HepG2 (cell line): ENCODE measurements at regions of chr14 and their contacts with region 1.

Region 1: DNA sequence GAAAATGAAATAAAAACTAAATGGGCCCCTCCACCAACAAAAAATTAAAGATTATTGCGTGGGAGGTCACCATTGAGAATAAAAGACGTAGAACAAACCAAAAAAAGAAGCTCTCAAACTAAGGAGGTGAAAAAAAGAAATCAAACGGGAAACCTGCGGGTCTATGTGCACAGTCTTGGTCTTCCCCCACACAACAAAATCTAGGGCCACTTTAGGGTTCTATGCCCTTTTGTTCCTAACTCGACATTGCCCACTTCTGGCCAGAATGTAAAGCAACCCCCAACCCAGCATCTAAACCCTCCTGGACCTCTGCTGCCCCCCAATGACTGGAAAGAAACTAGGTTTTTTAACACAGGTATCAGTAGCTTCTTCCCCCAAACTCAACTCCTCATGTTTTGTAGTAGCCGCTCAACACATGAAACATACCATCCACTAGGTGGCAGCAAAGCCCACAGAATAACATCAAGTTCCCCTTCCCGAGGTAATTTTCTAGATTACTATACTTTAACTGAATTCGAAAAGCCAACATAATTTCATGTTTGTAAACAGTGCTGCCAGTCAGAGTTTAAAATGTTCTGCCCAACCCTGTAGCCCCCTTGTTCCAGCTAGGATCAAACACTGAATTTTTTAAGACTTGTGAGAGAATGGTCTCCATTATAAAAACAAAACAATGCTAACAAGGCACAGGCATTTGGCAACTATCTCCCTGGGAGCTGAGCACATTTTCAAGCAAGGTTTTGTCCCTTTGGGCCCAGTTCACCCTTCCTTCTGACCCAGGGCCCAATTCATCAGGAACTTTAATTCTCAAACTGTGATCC is 18.7 kb downstream of the DAD1 start:
- DNase-seq: peak; percentile 98
- ATAC-seq: peak; percentile 86
- H3K4me3 ChIP-seq: no peak overlapping the region
- H3K27ac ChIP-seq: peak overlapping the region; percentile 12
- H3K4me1 ChIP-seq: peaks cover 29% of the 10 kb centered on the region
- H3K27me3 ChIP-seq: no peaks in the 10 kb centered on the region
- CTCF ChIP-seq: peak; percentile 97
- EP300 ChIP-seq: no peak; a peak in 1 of 4 replicates
- POLR2A ChIP-seq: no peak
- RAD21 ChIP-seq: peak; percentile 96

Region 2: GRCh38 chr14:22491683-22492621 is 78.4 kb before region 1 on chr14:
- CTCF ChIA-PET with region 1: no interaction called
- POLR2A ChIA-PET with region 1: no interaction called
- in situ Hi-C with region 1: no loop called
- intact Hi-C with region 1: no loop called
- DNase-seq: no peak
- ATAC-seq: no peak
- H3K4me3 ChIP-seq: no peak overlapping the region
- H3K27ac ChIP-seq: no peak overlapping the region
- H3K4me1 ChIP-seq: no peaks in the 10 kb centered on the region
- H3K27me3 ChIP-seq: peaks cover 2 to 28% of the 10 kb centered on the region in 2 experiments; a peak in 4 of 5 replicates
- CTCF ChIP-seq: no peak
- EP300 ChIP-seq: no peak
- POLR2A ChIP-seq: no peak
- RAD21 ChIP-seq: no peak

Region 3: DNA sequence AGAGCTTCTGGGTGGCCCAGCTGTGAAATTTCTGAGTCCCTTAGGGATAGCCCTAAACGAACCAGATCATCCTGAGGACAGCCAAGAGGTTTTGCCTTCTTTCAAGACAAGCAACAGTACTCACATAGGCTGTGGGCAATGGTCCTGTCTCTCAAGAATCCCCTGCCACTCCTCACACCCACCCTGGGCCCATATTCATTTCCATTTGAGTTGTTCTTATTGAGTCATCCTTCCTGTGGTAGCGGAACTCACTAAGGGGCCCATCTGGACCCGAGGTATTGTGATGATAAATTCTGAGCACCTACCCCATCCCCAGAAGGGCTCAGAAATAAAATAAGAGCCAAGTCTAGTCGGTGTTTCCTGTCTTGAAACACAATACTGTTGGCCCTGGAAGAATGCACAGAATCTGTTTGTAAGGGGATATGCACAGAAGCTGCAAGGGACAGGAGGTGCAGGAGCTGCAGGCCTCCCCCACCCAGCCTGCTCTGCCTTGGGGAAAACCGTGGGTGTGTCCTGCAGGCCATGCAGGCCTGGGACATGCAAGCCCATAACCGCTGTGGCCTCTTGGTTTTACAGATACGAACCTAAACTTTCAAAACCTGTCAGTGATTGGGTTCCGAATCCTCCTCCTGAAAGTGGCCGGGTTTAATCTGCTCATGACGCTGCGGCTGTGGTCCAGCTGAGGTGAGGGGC is 20.2 kb before region 1 on chr14:
- CTCF ChIA-PET with region 1: no interaction called
- POLR2A ChIA-PET with region 1: no interaction called
- in situ Hi-C with region 1: no loop called
- intact Hi-C with region 1: no loop called
- DNase-seq: no peak
- ATAC-seq: no peak
- H3K4me3 ChIP-seq: no peak overlapping the region
- H3K27ac ChIP-seq: no peak overlapping the region
- H3K4me1 ChIP-seq: 0 out of 2 replicates have a peak, but pooled peaks cover 8% of the 10 kb centered on the region
- H3K27me3 ChIP-seq: peaks cover 11 to 82% of the 10 kb centered on the region in 2 experiments; a peak in 4 of 5 replicates
- CTCF ChIP-seq: no peak
- EP300 ChIP-seq: no peak
- POLR2A ChIP-seq: no peak
- RAD21 ChIP-seq: no peak

Region 4: GRCh38 chr14:22598099-22598899 is 28.0 kb after region 1 on chr14 and contains the start of gene ABHD4:
- CTCF ChIA-PET with region 1: no interaction called
- POLR2A ChIA-PET with region 1: interaction called, 18 read pairs
- in situ Hi-C with region 1: no loop called
- intact Hi-C with region 1: no loop called
- DNase-seq: peak; percentile 79
- ATAC-seq: peak; percentile 95
- H3K4me3 ChIP-seq: peak within 1 kb of the TSS; percentile 76 to 94 (median 82)
- H3K27ac ChIP-seq: peak within 1 kb of the TSS; percentile 73
- H3K4me1 ChIP-seq: peaks cover 34% of the 10 kb centered on the region
- H3K27me3 ChIP-seq: peaks cover 0 to 13% of the 10 kb centered on the region in 2 experiments; a peak in 2 of 5 replicates
- CTCF ChIP-seq: no peak
- EP300 ChIP-seq: peak; percentile 32 to 50; a peak in 2 of 4 replicates
- POLR2A ChIP-seq: peak in 1 of 2 experiments; percentile 85; a peak in 2 of 4 replicates
- RAD21 ChIP-seq: 0 out of 2 replicates have a peak, but pooled peaks have one; percentile 6
- total RNA-seq, gene ABHD4: 16.1 and 22.8 TPM in 2 replicates

Region 5: GRCh38 chr14:22644305-22644635 is 73.9 kb after region 1 on chr14 and contains the start of gene OR6J1:
- CTCF ChIA-PET with region 1: interaction called, 25 read pairs
- POLR2A ChIA-PET with region 1: no interaction called
- in situ Hi-C with region 1: no loop called
- intact Hi-C with region 1: loop called (anchors 1 kb)
- DNase-seq: no peak
- ATAC-seq: peak; percentile 66
- H3K4me3 ChIP-seq: no peak within 1 kb of the TSS
- H3K27ac ChIP-seq: no peak within 1 kb of the TSS
- H3K4me1 ChIP-seq: peaks cover 14% of the 10 kb centered on the region
- H3K27me3 ChIP-seq: peaks cover 0 to 3% of the 10 kb centered on the region in 2 experiments; a peak in 3 of 5 replicates
- CTCF ChIP-seq: no peak
- EP300 ChIP-seq: no peak
- POLR2A ChIP-seq: no peak
- RAD21 ChIP-seq: no peak
- total RNA-seq, gene OR6J1: not detected in 2 replicates

Region 6: DNA sequence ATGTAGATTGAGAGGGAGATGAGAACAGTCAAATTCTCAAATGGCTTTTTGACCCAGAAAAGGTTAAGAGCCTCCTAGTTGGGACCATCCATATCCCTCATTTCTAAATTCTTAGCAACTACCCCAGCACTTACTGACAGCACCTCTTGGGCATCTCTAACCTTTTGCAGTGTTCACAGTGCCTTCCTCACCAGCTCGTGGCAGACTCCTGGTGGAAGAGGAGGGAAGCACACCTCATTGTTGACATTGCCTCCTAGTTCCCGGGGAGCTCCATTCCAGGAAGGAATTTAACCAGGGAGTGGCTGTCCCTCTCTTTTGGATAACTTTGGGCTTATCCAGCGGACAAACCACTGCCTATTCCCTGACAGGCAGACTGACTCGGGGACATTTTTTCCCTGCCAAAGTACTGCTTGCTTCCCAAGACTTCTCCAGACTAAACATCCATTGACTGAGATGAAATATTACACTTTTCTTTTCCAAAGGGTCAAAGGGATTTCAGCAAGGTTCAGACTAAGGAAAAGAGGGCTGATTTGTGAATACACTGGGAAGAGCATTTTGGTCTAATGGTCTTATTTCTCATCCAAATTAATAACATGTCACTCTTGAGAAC is 82.8 kb after region 1 on chr14:
- CTCF ChIA-PET with region 1: interaction called, 93 read pairs
- POLR2A ChIA-PET with region 1: interaction called, 7 read pairs
- in situ Hi-C with region 1: no loop called
- intact Hi-C with region 1: loop called (anchors 1 kb)
- DNase-seq: peak; percentile 86
- ATAC-seq: peak; percentile 98
- H3K4me3 ChIP-seq: no peak overlapping the region
- H3K27ac ChIP-seq: no peak overlapping the region
- H3K4me1 ChIP-seq: 0 out of 2 replicates have a peak, but pooled peaks cover 5% of the 10 kb centered on the region
- H3K27me3 ChIP-seq: peaks cover 3 to 36% of the 10 kb centered on the region in 2 experiments; a peak in 4 of 5 replicates
- CTCF ChIP-seq: peak; percentile 99
- EP300 ChIP-seq: no peak; a peak in 1 of 4 replicates
- POLR2A ChIP-seq: no peak
- RAD21 ChIP-seq: peak; percentile 94

Region 7: DNA sequence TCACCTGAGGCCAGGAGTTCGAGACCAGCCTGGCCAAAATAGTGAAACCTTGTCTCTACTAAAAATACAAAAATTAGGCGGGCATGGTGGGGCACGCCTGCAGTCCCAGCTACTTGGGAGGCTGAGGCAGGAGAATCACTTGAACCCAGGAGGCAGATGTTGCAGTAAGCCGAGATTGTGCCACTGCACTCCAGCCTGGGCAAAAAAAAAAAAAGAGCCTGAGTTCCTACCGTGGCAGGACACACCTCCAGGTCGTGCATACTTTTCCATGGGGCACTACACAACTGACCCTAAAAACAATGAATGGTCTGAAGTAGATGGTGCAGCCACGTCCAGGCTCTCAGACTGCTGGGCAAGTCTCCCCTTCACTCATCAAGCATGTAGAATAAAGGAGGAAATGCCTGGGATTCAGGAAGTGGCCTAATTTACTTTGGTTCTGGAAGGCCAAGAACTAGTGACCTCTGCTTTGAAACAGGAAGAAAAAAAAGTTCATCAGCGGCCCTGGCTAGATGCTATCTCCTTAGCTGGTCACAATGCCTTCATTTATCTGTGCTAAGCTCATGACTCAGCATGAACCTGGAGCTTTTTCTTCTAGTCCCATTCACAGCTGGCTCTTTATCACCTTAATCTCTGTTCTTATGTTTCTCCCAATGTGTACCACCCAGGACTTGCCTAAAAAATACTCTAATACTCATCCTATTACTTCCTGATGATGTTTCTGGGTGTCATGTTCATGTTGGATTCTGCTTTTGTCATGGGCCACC is 129.6 kb after region 1 on chr14:
- CTCF ChIA-PET with region 1: no interaction called
- POLR2A ChIA-PET with region 1: no interaction called
- in situ Hi-C with region 1: no loop called
- intact Hi-C with region 1: no loop called
- DNase-seq: peak; percentile 100
- ATAC-seq: peak; percentile 90
- H3K4me3 ChIP-seq: peak overlapping the region in 1 of 3 experiments; percentile 3; a peak in 1 of 6 replicates
- H3K27ac ChIP-seq: peak overlapping the region; percentile 55
- H3K4me1 ChIP-seq: peaks cover 28% of the 10 kb centered on the region
- H3K27me3 ChIP-seq: no peaks in the 10 kb centered on the region
- CTCF ChIP-seq: no peak
- EP300 ChIP-seq: peak; percentile 22 to 99; a peak in 2 of 4 replicates
- POLR2A ChIP-seq: no peak
- RAD21 ChIP-seq: no peak

Region 8: DNA sequence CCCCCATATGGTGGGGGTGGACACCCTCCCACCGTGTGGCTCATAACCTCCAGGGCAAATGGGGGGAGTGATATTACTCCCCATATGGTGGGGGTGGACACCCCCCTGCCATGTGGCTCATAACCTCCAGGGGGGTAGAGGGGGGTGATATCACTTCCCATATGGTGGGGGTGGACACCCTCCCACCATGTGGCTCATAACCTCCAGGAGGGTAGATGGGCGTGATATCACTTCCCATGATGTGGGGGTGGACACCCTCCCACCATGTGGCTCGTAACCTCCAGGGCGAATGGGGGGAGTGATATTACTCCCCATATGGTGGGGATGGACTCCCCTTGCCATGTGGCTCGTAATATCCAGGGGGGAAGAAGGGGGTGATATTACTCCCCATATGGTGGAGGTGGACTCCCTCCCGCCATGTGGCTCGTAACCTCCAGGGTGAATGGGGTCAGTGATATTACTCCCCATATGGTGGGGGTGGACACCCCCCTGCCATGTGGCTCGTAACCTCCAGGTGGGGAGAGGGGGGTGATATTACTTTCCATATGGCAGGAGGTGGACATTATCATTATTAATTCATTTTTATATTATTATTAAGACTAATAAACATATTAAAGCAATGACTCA is 145.0 kb after region 1 on chr14:
- CTCF ChIA-PET with region 1: interaction called, 12 read pairs
- POLR2A ChIA-PET with region 1: no interaction called
- in situ Hi-C with region 1: no loop called
- intact Hi-C with region 1: loop called (anchors 1 kb)
- DNase-seq: no peak
- ATAC-seq: no peak; the same call in 2 of the 3 replicates
- H3K4me3 ChIP-seq: no peak overlapping the region
- H3K27ac ChIP-seq: no peak overlapping the region
- H3K4me1 ChIP-seq: peaks cover 13% of the 10 kb centered on the region
- H3K27me3 ChIP-seq: peaks cover 0 to 13% of the 10 kb centered on the region in 2 experiments; a peak in 1 of 5 replicates
- CTCF ChIP-seq: no peak
- EP300 ChIP-seq: no peak
- POLR2A ChIP-seq: no peak
- RAD21 ChIP-seq: no peak

Region 9: DNA sequence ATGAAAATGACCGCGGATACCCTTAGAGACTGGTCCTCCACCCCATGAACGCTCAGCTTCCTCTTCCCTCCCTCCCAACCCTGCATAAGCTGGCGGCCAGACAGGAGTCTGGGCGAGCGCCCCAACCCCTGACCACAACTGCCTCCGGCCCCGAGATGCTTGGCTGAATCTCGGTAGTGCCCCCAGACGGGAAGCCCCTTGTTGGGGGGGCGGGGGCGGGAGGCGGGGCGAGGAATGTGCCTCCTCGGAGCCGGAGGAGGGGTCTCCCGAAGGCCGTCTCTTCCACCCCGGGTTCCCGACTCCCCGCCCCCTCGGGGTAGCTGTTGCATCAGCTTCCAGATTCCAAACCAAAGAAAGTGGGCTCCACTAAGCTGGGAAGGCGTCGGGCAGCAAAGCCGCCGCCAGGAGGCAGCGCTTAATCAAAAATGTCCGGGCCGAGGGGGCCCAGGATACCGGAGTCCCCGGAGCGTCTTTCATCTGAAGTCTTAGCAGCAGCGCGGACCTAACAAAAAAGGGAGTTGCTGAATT is 252.3 kb after region 1 on chr14:
- CTCF ChIA-PET with region 1: interaction called, 4 read pairs
- POLR2A ChIA-PET with region 1: interaction called, 4 read pairs
- in situ Hi-C with region 1: no loop called
- intact Hi-C with region 1: loop called (anchors 5 kb)
- DNase-seq: peak; percentile 78
- ATAC-seq: peak; percentile 70
- H3K4me3 ChIP-seq: peak overlapping the region; percentile 12 to 53 (median 27); a peak in 5 of 6 replicates
- H3K27ac ChIP-seq: no peak overlapping the region
- H3K4me1 ChIP-seq: peaks cover 67% of the 10 kb centered on the region
- H3K27me3 ChIP-seq: 0 out of 5 replicates have a peak, but pooled peaks cover 0 to 3% of the 10 kb centered on the region in 2 experiments
- CTCF ChIP-seq: peak; percentile 93
- EP300 ChIP-seq: 0 out of 4 replicates have a peak, but pooled peaks of 1 of the 2 experiments have one; percentile 19
- POLR2A ChIP-seq: no peak
- RAD21 ChIP-seq: peak; percentile 97